ENCODE measurements at regions of chr11 and their contacts with region 1.

Region 1: GRCh38 chr11:19561011-19561410 is 151.6 kb upstream of the NAV2 start:
- DNase-seq: no peak
- CTCF ChIP-seq: no peak

Region 2: GRCh38 chr11:19742588-19743292 is 181.7 kb after region 1 on chr11:
- in situ Hi-C with region 1: loop called (anchors 10 kb)
- DNase-seq: peak; percentile 44
- CTCF ChIP-seq: peak; percentile 83

Region 3: DNA sequence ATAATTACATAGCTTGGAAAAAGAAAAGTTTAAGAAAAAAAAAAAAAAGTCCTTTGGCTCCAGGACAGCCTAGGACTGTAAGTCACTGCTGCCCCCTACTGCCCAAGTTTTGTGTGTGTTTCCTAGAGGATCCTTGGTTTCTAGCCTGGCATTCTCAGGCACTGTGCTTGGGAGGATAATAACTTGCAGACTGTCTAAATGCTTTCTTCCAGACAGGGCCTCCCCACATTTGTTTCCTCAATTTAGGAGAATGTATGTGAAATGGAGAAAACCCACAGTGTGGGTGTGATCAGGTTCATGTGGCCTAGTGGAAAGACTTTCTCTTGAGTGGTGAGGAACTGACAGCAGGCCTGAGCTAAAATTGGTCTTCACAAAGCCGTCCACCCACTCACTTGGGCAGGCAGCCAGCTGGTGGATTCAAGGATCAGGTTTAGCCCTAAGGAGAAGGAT is 342.6 kb after region 1 on chr11:
- in situ Hi-C with region 1: loop called (anchors 5 kb)
- DNase-seq: peak; percentile 38
- CTCF ChIP-seq: peak; percentile 83

Measured in GM13977 (cell line).